Activated T-helper 2 cell treated with anti-CD3 and anti-CD28 coated beads, Interferon-gamma antibody, Interleukin-2, Interleukin-4, amounts not matched to agents 10 μg/mL and 5 μg/mL and 100 μg/mL, durations not matched to agents 14 hours and 24 hours and 36 hours (primary cell): ENCODE measurements at regions of chr3 and their contacts with region 1.

Region 1: DNA sequence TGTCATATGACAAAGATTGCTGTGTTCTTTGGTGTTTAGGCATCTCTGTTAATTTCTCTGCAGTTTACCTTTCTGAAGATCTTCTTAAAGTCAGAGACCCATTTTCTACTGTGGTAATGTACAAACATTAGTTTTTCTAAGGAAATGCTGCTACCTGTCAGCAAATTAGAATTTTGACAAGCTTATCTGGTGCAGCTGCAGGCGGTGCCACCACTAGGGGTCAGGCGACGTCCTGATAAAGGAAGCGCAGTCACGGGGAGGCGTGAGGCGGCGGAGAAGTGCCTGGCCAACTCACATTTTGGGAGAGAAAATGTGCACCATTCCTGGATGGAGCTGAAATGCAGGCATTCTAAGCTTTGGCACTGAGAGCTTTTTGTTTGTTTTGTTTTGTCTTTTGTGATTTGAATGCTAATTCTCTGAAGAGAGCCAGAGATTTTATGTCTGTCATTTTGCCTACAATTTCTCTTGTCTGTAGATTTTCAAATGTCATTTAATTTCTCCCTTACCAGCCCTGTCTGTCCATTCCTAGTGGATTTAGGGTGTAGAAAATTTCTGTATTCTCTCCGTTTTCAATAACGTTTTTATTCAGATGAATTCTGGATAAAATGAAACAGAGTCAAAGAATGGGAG is 24.9 kb upstream of the SIAH2 start:
- DNase-seq: peak; percentile 59
- H3K4me3 Mint-ChIP-seq: no peak overlapping the region
- H3K27ac Mint-ChIP-seq: no peak overlapping the region
- H3K4me1 Mint-ChIP-seq: peaks cover 41% of the 10 kb centered on the region
- H3K27me3 Mint-ChIP-seq: peaks cover 2% of the 10 kb centered on the region

Region 2: GRCh38 chr3:150469943-150470738 is 317.7 kb before region 1 on chr3:
- intact Hi-C with region 1: no loop called
- DNase-seq: no peak
- H3K4me3 Mint-ChIP-seq: no peak overlapping the region
- H3K27ac Mint-ChIP-seq: no peak overlapping the region
- H3K4me1 Mint-ChIP-seq: no peaks in the 10 kb centered on the region
- H3K27me3 Mint-ChIP-seq: peaks cover 3% of the 10 kb centered on the region

Region 3: GRCh38 chr3:150610790-150611189 is 177.1 kb before region 1 on chr3:
- intact Hi-C with region 1: loop called (anchors 5 kb)
- DNase-seq: no peak
- H3K4me3 Mint-ChIP-seq: no peak overlapping the region
- H3K27ac Mint-ChIP-seq: no peak overlapping the region
- H3K4me1 Mint-ChIP-seq: peaks cover 71% of the 10 kb centered on the region
- H3K27me3 Mint-ChIP-seq: no peaks in the 10 kb centered on the region

Region 4: GRCh38 chr3:150653110-150653561 is 134.7 kb before region 1 on chr3:
- intact Hi-C with region 1: no loop called
- DNase-seq: no peak
- H3K4me3 Mint-ChIP-seq: no peak overlapping the region
- H3K27ac Mint-ChIP-seq: no peak overlapping the region
- H3K4me1 Mint-ChIP-seq: peaks cover 3% of the 10 kb centered on the region
- H3K27me3 Mint-ChIP-seq: peaks cover 23% of the 10 kb centered on the region

Region 5: GRCh38 chr3:150737874-150738713 is 49.8 kb before region 1 on chr3:
- intact Hi-C with region 1: loop called (anchors 1 kb)
- DNase-seq: no peak
- H3K4me3 Mint-ChIP-seq: peak overlapping the region; percentile 53
- H3K27ac Mint-ChIP-seq: peak overlapping the region; percentile 100
- H3K4me1 Mint-ChIP-seq: peaks cover 91% of the 10 kb centered on the region
- H3K27me3 Mint-ChIP-seq: no peaks in the 10 kb centered on the region

Region 6: GRCh38 chr3:150830094-150830681 is 42.3 kb after region 1 on chr3:
- intact Hi-C with region 1: no loop called
- DNase-seq: no peak
- H3K4me3 Mint-ChIP-seq: no peak overlapping the region
- H3K27ac Mint-ChIP-seq: no peak overlapping the region
- H3K4me1 Mint-ChIP-seq: no peaks in the 10 kb centered on the region
- H3K27me3 Mint-ChIP-seq: peaks cover 19% of the 10 kb centered on the region

Region 7: GRCh38 chr3:150870396-150870795 is 82.5 kb after region 1 on chr3:
- intact Hi-C with region 1: loop called (anchors 1 kb)
- DNase-seq: no peak
- H3K4me3 Mint-ChIP-seq: no peak overlapping the region
- H3K27ac Mint-ChIP-seq: no peak overlapping the region
- H3K4me1 Mint-ChIP-seq: peaks cover 11% of the 10 kb centered on the region
- H3K27me3 Mint-ChIP-seq: peaks cover 3% of the 10 kb centered on the region